Lower lobe of right lung (tissue), 2 donors: ENCODE measurements at regions of chr10 and their contacts with region 1.

Region 1: GRCh38 chr10:86693721-86694369 is 25.5 kb downstream of the LDB3 start:
- DNase-seq: no peak
- ATAC-seq: peak; percentile 49 to 65
- H3K4me3 ChIP-seq: no peak overlapping the region
- H3K27ac ChIP-seq: no peak overlapping the region
- H3K4me1 ChIP-seq: peaks cover 8% of the 10 kb centered on the region
- H3K27me3 ChIP-seq: no peaks in the 10 kb centered on the region
- CTCF ChIP-seq: peak; percentile 64

Region 2: GRCh38 chr10:86899670-86900276 is 205.9 kb after region 1 on chr10:
- intact Hi-C with region 1: loop called (anchors 5 kb)
- DNase-seq: no peak
- ATAC-seq: peak; percentile 82 to 84
- H3K4me3 ChIP-seq: no peak overlapping the region
- H3K27ac ChIP-seq: no peak overlapping the region
- H3K4me1 ChIP-seq: peaks cover 4% of the 10 kb centered on the region
- H3K27me3 ChIP-seq: no peaks in the 10 kb centered on the region
- CTCF ChIP-seq: peak; percentile 73